Naive thymus-derived CD4-positive, alpha-beta T cell (primary cell): ENCODE measurements at regions of chr2 and their contacts with region 1.

Region 1: GRCh38 chr2:109031476-109032228 is 42.6 kb upstream of the EDAR start:
- DNase-seq: peak; percentile 45 to 98 (median 93)
- ATAC-seq: peak; percentile 83
- H3K4me3 ChIP-seq: peak overlapping the region; percentile 58
- H3K4me3 Mint-ChIP-seq: peak overlapping the region; percentile 45 to 91 (median 77)
- H3K27ac ChIP-seq: peak overlapping the region; percentile 83
- H3K27ac Mint-ChIP-seq: peak overlapping the region; percentile 84 to 99 (median 98)
- H3K4me1 ChIP-seq: peaks cover 44 to 72% of the 10 kb centered on the region in 2 donors
- H3K4me1 Mint-ChIP-seq: peaks cover 33 to 84% (median 68%) of the 10 kb centered on the region in 7 donors
- H3K27me3 ChIP-seq: no peaks in the 10 kb centered on the region
- H3K27me3 Mint-ChIP-seq: no peaks in the 10 kb centered on the region

Region 2: DNA sequence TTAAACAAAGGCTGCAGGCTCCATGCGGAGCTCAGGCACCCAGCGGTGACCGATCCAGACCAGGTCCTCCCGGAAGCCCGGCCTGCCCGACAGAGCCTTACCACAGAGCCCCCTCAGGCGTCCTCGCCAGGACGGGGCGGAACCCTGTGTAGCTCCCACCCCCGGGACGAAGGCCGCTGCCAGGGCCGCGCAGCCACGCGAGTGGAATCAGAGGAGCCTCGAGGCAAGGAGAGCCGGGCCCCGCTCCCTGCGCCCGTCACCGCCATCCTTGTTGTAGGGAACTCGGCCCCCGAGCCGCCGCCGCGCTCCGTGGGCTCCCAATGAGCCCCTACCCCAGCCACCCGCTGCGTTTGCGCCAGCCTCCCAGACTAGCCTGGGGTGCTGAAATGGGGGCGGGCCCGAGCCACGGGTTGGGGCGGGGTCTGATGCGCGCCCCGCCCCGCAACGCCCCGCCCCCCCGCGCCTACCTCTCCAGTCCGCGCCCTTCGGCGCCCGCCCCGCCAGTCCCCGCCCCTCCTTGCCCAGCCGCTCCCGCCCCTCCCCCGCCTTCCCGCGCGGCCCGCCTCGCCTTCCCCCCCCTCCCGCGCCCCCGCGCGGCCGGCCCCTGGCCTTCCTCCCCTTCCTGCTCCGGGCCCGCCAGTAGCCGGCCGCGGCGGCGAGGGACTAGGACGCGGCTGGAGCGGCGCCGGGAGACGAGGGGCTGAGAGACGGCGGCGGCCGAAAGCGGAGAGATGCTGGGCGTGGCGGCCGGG is 497.6 kb before region 1 on chr2 and contains the start of gene LIMS1:
- CTCF ChIA-PET with region 1: no interaction called
- POLR2A ChIA-PET with region 1: no interaction called
- intact Hi-C with region 1: loop called in 1 of 2 experiments (anchors 10 kb)
- DNase-seq: peak; percentile 69 to 85 (median 79)
- ATAC-seq: peak; percentile 98
- H3K4me3 ChIP-seq: peak within 1 kb of the TSS; percentile 93
- H3K4me3 Mint-ChIP-seq: peak within 1 kb of the TSS; percentile 86 to 99 (median 95)
- H3K27ac ChIP-seq: peak within 1 kb of the TSS; percentile 76
- H3K27ac Mint-ChIP-seq: peak within 1 kb of the TSS; percentile 34 to 96 (median 89)
- H3K4me1 ChIP-seq: peaks cover 3 to 9% of the 10 kb centered on the region in 2 donors
- H3K4me1 Mint-ChIP-seq: peaks cover 20 to 59% (median 28%) of the 10 kb centered on the region in 7 donors
- H3K27me3 ChIP-seq: no peaks in the 10 kb centered on the region
- H3K27me3 Mint-ChIP-seq: no peaks in the 10 kb centered on the region
- total RNA-seq, gene LIMS1: 25.3 to 75.3 (median 49.9) TPM

Region 3: GRCh38 chr2:108927936-108928659 is 103.6 kb before region 1 on chr2:
- CTCF ChIA-PET with region 1: interaction called, 5 read pairs
- POLR2A ChIA-PET with region 1: interaction called, 9 read pairs
- intact Hi-C with region 1: loop called in 1 of 2 experiments (anchors 1 kb)
- DNase-seq: peak in 6 of 9 donors; percentile 33 to 59 (median 50)
- ATAC-seq: peak; percentile 38
- H3K4me3 ChIP-seq: no peak overlapping the region
- H3K4me3 Mint-ChIP-seq: no peak overlapping the region
- H3K27ac ChIP-seq: no peak overlapping the region
- H3K27ac Mint-ChIP-seq: peak overlapping the region in 5 of 9 donors; percentile 0 to 28 (median 4)
- H3K4me1 ChIP-seq: peaks cover 0 to 5% of the 10 kb centered on the region in 2 donors
- H3K4me1 Mint-ChIP-seq: peaks cover 2 to 34% (median 25%) of the 10 kb centered on the region in 7 donors
- H3K27me3 ChIP-seq: no peaks in the 10 kb centered on the region
- H3K27me3 Mint-ChIP-seq: no peaks in the 10 kb centered on the region

Region 4: GRCh38 chr2:108998911-108999310 is 32.7 kb before region 1 on chr2:
- CTCF ChIA-PET with region 1: interaction called, 3 read pairs
- POLR2A ChIA-PET with region 1: interaction called, 11 read pairs
- intact Hi-C with region 1: no loop called
- DNase-seq: no peak
- ATAC-seq: no peak
- H3K4me3 ChIP-seq: no peak overlapping the region
- H3K4me3 Mint-ChIP-seq: no peak overlapping the region
- H3K27ac ChIP-seq: no peak overlapping the region
- H3K27ac Mint-ChIP-seq: no peak overlapping the region
- H3K4me1 ChIP-seq: peaks cover 0 to 11% of the 10 kb centered on the region in 2 donors
- H3K4me1 Mint-ChIP-seq: peaks cover 4 to 35% (median 26%) of the 10 kb centered on the region in 7 donors
- H3K27me3 ChIP-seq: no peaks in the 10 kb centered on the region
- H3K27me3 Mint-ChIP-seq: no peaks in the 10 kb centered on the region

Region 5: DNA sequence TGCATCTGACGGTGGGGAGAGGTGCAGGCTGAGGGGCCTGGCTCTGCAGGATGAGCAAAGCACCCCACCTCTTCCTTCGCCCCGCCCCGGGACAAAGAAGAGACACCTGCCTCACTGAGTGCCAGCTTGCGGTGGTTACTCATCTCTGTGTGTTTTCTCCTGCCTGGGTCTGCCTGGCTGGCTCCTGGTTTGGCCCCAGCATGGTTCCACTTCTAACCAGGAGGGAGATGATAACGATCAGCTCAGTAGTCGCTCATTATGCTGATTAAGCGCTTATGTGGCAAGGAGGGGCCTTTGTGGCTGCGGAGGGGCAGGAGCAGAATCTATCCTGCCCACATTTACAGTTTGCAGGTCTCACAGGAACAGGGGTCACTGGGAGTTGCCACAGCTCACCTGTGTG is 26.0 kb after region 1 on chr2:
- CTCF ChIA-PET with region 1: interaction called, 4 read pairs
- POLR2A ChIA-PET with region 1: interaction called, 13 read pairs
- intact Hi-C with region 1: loop called in 1 of 2 experiments (anchors 1 kb)
- DNase-seq: peak in 1 of 9 donors; percentile 39
- ATAC-seq: peak; percentile 55
- H3K4me3 ChIP-seq: no peak overlapping the region
- H3K4me3 Mint-ChIP-seq: peak overlapping the region in 2 of 10 donors; percentile 56 to 71
- H3K27ac ChIP-seq: no peak overlapping the region
- H3K27ac Mint-ChIP-seq: peak overlapping the region in 2 of 9 donors; percentile 25 to 86
- H3K4me1 ChIP-seq: peaks cover 0 to 20% of the 10 kb centered on the region in 2 donors
- H3K4me1 Mint-ChIP-seq: peaks cover 7 to 59% (median 46%) of the 10 kb centered on the region in 7 donors
- H3K27me3 ChIP-seq: no peaks in the 10 kb centered on the region
- H3K27me3 Mint-ChIP-seq: no peaks in the 10 kb centered on the region

Region 6: GRCh38 chr2:109143214-109144187 is 111.8 kb after region 1 on chr2:
- CTCF ChIA-PET with region 1: no interaction called
- POLR2A ChIA-PET with region 1: interaction called, 5 read pairs
- intact Hi-C with region 1: loop called (anchors 1 to 5 kb)
- DNase-seq: peak in 8 of 9 donors; percentile 60 to 82 (median 76)
- ATAC-seq: peak; percentile 86
- H3K4me3 ChIP-seq: peak overlapping the region; percentile 4
- H3K4me3 Mint-ChIP-seq: peak overlapping the region; percentile 39 to 80 (median 70)
- H3K27ac ChIP-seq: peak overlapping the region; percentile 37
- H3K27ac Mint-ChIP-seq: peak overlapping the region; percentile 6 to 92 (median 84)
- H3K4me1 ChIP-seq: peaks cover 13 to 23% of the 10 kb centered on the region in 2 donors
- H3K4me1 Mint-ChIP-seq: peaks cover 20 to 62% (median 51%) of the 10 kb centered on the region in 7 donors
- H3K27me3 ChIP-seq: no peaks in the 10 kb centered on the region
- H3K27me3 Mint-ChIP-seq: peaks cover 0 to 52% (median 0%) of the 10 kb centered on the region in 5 donors

Region 7: DNA sequence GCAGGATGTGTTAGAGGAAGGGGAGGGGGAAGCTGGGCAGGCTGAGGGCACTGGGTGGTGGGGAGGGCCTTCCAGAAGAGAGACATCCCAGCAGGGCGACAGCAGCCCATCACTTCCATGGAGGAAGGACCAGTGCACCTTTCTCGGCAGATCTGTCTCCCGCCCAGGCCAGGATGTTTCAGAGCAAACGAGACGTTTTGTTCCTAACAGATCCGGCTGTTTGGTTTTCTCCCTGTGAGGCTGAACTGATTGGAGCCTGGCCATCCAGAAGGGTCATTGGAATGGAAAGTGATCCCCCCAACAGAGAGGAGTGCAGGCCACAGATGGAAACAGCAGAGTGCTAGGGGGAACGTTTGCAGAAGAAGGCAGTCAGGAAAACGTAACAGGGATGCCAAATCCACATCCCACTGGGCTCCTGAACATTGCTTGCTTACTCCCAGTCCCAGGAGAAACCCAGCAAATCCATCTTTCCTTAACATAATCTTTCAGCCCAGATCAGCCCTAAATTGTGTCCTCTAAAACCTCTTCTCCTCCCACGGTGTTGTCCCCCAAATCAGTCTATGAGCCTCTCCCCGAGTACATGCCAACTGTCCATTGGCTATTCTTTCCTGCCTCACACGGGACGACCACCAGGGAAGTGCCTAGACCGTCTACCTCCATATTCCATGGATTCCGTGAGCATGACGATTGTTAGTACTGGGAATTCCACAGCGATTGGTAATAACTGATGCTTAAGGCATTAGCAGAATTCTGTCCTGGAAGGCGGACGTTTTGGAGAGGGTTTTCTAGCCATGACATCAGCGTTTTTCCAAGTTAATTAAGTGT is 455.3 kb after region 1 on chr2:
- CTCF ChIA-PET with region 1: no interaction called
- POLR2A ChIA-PET with region 1: no interaction called
- intact Hi-C with region 1: no loop called
- DNase-seq: no peak
- ATAC-seq: no peak
- H3K4me3 ChIP-seq: no peak overlapping the region
- H3K4me3 Mint-ChIP-seq: no peak overlapping the region
- H3K27ac ChIP-seq: no peak overlapping the region
- H3K27ac Mint-ChIP-seq: peak overlapping the region in 1 of 9 donors; percentile 64
- H3K4me1 ChIP-seq: no peaks in the 10 kb centered on the region
- H3K4me1 Mint-ChIP-seq: peaks cover 0 to 3% (median 0%) of the 10 kb centered on the region in 7 donors
- H3K27me3 ChIP-seq: no peaks in the 10 kb centered on the region
- H3K27me3 Mint-ChIP-seq: no peaks in the 10 kb centered on the region